ENCODE measurements at regions of chr11 and their contacts with region 1.

Region 1: DNA sequence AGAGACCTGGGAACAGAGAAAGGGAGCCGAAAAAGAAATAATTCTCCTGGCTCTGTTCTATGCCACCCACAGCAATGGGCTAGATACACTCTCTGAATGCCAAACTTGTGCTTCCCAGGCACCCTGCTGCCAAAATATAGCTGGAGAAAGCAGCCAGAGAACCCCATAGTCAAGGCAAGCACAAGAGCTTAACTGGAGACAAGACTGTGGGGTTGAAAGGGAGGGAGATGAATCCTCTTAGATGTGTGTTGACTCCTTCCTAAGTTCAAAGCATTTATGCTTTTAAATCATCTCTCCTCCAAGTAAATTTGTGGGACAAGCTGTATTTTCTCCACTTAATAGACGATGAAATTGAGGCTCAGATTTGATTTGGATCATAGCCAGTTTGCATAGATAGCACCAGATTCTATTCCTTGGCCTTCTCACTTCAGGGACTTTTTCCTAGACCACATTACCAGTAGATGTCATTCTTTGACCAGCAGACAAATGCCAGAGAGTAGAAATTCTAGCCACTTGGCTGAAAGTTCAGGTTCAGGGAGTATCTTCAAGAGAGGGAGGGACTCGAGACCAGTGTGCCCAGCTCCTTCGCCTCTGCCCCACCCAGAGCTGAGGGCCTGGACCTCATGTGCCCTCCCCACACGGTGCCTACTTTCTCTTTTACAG is 16.5 kb upstream of the ETS1 start:
- DNase-seq: no peak
- ATAC-seq: peak; percentile 63
- H3K4me3 Mint-ChIP-seq: no peak overlapping the region
- H3K27ac Mint-ChIP-seq: peak overlapping the region; percentile 78
- H3K4me1 Mint-ChIP-seq: peaks cover 70% of the 10 kb centered on the region
- H3K27me3 Mint-ChIP-seq: no peaks in the 10 kb centered on the region
- CTCF ChIP-seq: no peak

Region 2: GRCh38 chr11:128530118-128531074 is 73.5 kb before region 1 on chr11:
- CTCF ChIA-PET with region 1: no interaction called
- POLR2A ChIA-PET with region 1: no interaction called
- intact Hi-C with region 1: no loop called
- DNase-seq: no peak
- ATAC-seq: no peak
- H3K4me3 Mint-ChIP-seq: no peak overlapping the region
- H3K27ac Mint-ChIP-seq: no peak overlapping the region
- H3K4me1 Mint-ChIP-seq: peaks cover 18% of the 10 kb centered on the region
- H3K27me3 Mint-ChIP-seq: no peaks in the 10 kb centered on the region
- CTCF ChIP-seq: no peak

Region 3: GRCh38 chr11:128588093-128588492 is 15.8 kb before region 1 on chr11:
- CTCF ChIA-PET with region 1: no interaction called
- POLR2A ChIA-PET with region 1: interaction called, 3 read pairs
- intact Hi-C with region 1: loop called (anchors 2 kb)
- DNase-seq: no peak
- ATAC-seq: no peak
- H3K4me3 Mint-ChIP-seq: no peak overlapping the region
- H3K27ac Mint-ChIP-seq: no peak overlapping the region
- H3K4me1 Mint-ChIP-seq: peaks cover 24% of the 10 kb centered on the region
- H3K27me3 Mint-ChIP-seq: no peaks in the 10 kb centered on the region
- CTCF ChIP-seq: no peak

Region 4: GRCh38 chr11:128709402-128709801 is 105.5 kb after region 1 on chr11:
- CTCF ChIA-PET with region 1: no interaction called
- POLR2A ChIA-PET with region 1: no interaction called
- intact Hi-C with region 1: no loop called
- DNase-seq: no peak
- ATAC-seq: no peak
- H3K4me3 Mint-ChIP-seq: no peak overlapping the region
- H3K27ac Mint-ChIP-seq: peak overlapping the region; percentile 64
- H3K4me1 Mint-ChIP-seq: peaks cover 97% of the 10 kb centered on the region
- H3K27me3 Mint-ChIP-seq: no peaks in the 10 kb centered on the region
- CTCF ChIP-seq: no peak

Measured in activated B cell treated with CpG ODN at 0.5 μM for 24 hours (primary cell).